ENCODE measurements at regions of chr21 and their contacts with region 1.

Region 1: DNA sequence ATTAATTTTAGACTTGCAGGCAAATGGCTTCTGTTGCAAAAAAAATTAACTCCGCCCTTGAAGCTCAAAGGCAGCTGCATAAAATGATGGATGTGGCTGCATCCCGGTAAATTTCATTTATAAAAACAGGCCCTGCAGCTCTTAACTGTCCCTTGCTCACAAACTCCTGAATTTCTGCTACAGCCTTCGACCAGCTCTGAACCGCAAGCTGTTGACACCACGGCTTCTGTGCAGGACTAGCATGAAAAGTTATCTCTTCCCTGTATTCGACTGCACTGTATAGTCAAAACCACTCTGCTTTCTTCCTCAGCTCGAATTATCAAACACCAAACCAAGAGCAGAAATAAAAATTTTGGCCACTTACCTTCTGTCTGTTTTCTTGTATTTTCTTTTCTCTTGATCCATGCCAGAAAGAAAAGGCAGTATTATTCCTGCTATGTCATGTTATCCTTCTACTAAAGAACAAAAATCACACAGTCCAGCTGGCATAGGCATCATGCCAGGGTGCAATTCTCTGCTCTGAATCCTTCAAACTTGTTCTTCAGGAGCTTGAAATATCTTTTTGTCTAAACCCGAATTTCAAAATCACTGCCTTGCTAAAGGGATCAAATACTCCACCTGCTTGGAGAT is 195.5 kb upstream of the NCAM2 start:
- DNase-seq: no peak
- ATAC-seq: no peak
- H3K4me3 ChIP-seq: no peak overlapping the region
- H3K27ac ChIP-seq: no peak overlapping the region
- H3K4me1 ChIP-seq: no peaks in the 10 kb centered on the region
- H3K27me3 ChIP-seq: no peaks in the 10 kb centered on the region
- CTCF ChIP-seq: no peak

Region 2: GRCh38 chr21:20760221-20760620 is 42.5 kb before region 1 on chr21:
- intact Hi-C with region 1: loop called in 1 of 10 experiments (anchors 2 kb)
- DNase-seq: no peak
- ATAC-seq: no peak
- H3K4me3 ChIP-seq: no peak overlapping the region
- H3K27ac ChIP-seq: no peak overlapping the region
- H3K4me1 ChIP-seq: no peaks in the 10 kb centered on the region
- H3K27me3 ChIP-seq: no peaks in the 10 kb centered on the region
- CTCF ChIP-seq: no peak